ENCODE measurements at regions of chr17 and their contacts with region 1.

Region 1: DNA sequence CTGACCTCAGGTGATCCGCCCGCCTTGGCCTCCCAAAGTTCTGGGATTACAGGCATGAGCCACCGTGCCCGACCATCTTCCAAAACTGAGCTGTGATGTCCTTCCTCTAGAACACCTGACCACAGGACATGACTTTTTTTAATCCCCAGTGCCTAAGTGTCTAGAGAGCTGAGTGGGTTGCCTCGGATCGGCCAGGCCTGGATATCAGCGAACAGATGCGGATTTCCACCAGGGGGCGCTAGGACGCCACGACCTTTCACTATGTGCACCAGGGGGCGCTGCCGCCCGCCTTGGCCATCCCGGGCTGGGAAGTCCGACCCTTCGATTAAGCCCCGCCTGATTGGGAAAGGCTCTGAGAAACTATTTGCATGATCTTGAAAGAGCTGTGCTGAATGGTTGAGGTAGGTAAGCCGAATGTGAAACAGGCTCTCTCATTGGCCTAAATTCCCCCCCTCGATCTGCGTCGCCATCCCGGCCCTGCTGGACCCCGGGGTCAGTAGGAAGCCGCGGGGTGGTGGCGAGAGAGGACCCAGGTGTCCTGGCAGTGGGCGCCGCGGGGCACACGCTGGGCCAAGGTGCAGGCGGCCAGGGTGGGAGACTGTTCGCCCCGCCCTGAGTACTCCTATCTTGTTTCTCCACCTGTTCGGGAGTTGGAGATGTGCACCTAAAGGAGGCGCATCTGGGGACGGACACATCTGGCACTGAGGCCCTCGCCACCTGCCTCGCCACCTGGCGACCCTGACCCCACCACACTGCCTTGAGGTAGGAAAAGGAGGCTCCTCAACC is at the start of gene ACBD4:
- DNase-seq: peak; percentile 96
- H3K4me3 Mint-ChIP-seq: peak within 1 kb of the TSS; percentile 87
- H3K27ac Mint-ChIP-seq: peak within 1 kb of the TSS; percentile 68
- H3K4me1 Mint-ChIP-seq: peaks cover 15% of the 10 kb centered on the region
- H3K27me3 Mint-ChIP-seq: peaks cover 6% of the 10 kb centered on the region
- total RNA-seq, gene ACBD4: 11.3 and 12.5 TPM in 2 replicates

Region 2: GRCh38 chr17:45060797-45061605 is 74.4 kb before region 1 on chr17 and contains the start of gene NMT1:
- intact Hi-C with region 1: loop called (anchors 1 kb)
- DNase-seq: peak; percentile 96
- H3K4me3 Mint-ChIP-seq: peak within 1 kb of the TSS; percentile 92
- H3K27ac Mint-ChIP-seq: peak within 1 kb of the TSS; percentile 100
- H3K4me1 Mint-ChIP-seq: peaks cover 25% of the 10 kb centered on the region
- H3K27me3 Mint-ChIP-seq: peaks cover 2% of the 10 kb centered on the region
- total RNA-seq, gene NMT1: 168 and 173 TPM in 2 replicates

Region 3: DNA sequence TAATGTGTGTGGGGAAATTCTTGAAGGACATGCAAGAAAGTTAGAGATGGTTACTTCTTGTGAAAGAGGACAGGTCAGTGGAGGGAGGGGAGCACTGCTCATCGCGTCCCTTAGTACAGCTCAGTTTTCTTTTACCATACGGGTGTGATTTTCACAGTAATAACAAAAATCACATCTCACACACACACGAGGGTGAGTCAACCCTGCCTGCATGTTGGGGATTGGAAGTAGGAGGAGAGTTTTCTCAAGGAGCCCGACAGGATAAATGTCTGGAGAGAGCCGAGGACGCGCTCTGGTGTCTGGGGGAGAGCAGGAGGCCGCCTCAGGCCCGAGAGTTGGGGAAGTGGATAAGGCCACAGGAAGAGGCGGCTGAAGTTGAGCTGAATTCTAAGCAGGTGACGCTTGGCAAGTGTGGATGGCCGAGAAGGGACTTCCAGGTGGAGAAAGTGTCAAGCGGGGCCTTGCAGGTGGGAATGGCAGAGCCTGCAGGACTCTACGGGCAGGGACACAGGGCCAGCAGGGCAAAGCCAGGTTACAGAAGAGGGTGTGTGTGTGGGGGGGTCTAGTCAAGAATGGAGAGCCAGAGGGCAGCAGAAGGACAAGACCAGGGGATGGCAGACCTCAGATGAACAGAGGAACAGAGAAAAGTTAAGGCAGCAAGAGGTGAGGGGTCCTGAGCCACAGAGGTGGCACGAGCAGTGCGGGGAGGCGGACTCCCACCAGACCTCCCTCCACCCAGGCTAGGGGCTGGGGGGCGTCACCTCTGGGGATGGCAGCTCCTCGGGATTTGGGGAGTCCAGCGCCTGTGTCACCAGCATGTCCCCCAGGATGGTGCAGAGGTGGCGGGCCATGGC is 19.3 kb before region 1 on chr17:
- intact Hi-C with region 1: no loop called
- DNase-seq: no peak
- H3K4me3 Mint-ChIP-seq: no peak overlapping the region
- H3K27ac Mint-ChIP-seq: no peak overlapping the region
- H3K4me1 Mint-ChIP-seq: no peaks in the 10 kb centered on the region
- H3K27me3 Mint-ChIP-seq: peaks cover 7% of the 10 kb centered on the region

Region 4: DNA sequence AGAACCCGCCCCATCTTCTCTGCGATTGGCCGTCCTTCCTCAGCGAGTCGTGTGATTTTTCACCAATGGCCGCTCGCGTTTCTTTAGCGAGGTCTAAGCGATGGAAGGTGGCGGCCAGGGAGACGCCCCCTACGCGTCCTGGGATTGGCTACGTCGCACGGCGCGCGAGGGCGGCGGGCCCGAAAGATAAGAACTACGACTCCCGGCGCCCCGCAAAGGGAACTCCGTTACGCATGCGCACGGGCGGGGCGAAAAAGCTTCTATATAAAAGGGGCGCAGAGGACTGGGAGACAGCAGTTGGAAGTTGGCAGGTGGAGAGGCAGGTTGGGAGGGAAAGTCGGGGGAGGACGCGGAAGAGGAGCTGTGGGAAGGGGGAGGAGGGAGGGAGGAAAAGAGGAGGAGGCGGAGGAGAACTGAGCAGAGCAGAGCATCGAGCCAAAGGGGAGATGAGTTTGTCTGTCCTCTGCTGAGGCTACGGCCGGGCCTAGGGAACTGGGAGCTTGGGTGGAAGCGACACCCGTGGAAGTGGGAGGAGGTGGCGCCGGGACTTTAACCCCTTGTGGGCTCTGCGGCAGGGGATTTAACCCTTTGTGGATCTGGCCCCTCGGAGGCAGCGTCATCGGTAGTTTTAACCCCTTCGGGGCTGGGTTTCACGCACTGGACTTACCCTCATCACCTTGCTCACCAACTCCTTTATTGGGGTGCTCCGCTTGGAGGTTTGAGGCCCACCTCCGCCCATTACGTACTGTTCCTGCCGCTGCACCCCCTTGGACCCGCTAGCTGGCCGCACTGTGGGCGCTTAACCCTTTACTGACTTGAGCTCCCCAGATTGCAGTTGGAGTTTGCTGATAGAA is 13.0 kb after region 1 on chr17 and contains the start of gene HEXIM1:
- intact Hi-C with region 1: loop called (anchors 1 kb)
- DNase-seq: peak; percentile 99
- H3K4me3 Mint-ChIP-seq: peak within 1 kb of the TSS; percentile 96
- H3K27ac Mint-ChIP-seq: peak within 1 kb of the TSS; percentile 98
- H3K4me1 Mint-ChIP-seq: peaks cover 26% of the 10 kb centered on the region
- H3K27me3 Mint-ChIP-seq: no peaks in the 10 kb centered on the region
- total RNA-seq, gene HEXIM1: 65.9 and 67.9 TPM in 2 replicates

Region 5: DNA sequence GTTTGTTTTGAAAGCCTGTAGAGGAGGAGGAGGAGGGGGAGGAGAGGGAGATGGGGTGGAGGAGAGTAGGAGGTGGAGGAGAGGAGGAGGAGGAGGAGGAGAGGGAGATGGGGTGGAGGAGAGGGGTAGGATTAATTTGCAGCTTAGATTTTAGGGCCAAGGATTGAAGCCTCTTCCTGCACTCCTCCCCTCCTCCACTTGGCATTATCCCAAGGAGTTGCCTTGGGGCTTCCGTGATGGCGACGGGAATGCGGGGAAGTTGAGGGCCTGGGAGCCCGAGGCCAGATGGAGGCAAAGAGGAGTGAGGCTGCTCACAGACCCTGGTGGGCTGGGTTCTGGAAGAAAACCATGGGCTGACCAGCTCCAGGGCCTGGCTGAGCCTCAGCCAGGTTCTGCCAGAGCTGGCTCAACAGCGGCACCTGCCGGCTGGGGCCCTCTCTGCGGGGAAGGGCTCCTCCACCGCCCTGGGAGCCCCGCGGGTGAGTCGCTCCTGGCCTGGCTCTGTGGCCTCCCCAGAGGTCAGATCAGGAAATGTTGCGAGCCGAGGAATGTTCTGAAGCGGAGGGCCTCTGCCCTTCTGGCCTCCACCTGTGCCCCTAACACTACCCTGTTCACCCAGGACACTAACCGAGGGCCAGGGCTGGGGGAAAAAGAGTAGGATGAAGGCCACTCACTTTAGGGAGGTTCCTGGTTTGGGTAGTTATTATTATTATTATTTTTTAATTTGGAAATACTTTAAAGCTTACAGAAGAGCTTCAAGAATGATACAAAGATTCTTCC is 62.4 kb after region 1 on chr17:
- intact Hi-C with region 1: loop called (anchors 1 kb)
- DNase-seq: peak; percentile 79
- H3K4me3 Mint-ChIP-seq: no peak overlapping the region
- H3K27ac Mint-ChIP-seq: no peak overlapping the region
- H3K4me1 Mint-ChIP-seq: no peaks in the 10 kb centered on the region
- H3K27me3 Mint-ChIP-seq: no peaks in the 10 kb centered on the region

Region 6: GRCh38 chr17:45256114-45256966 is 121.0 kb after region 1 on chr17:
- intact Hi-C with region 1: no loop called
- DNase-seq: no peak
- H3K4me3 Mint-ChIP-seq: no peak overlapping the region
- H3K27ac Mint-ChIP-seq: no peak overlapping the region
- H3K4me1 Mint-ChIP-seq: peaks cover 57% of the 10 kb centered on the region
- H3K27me3 Mint-ChIP-seq: no peaks in the 10 kb centered on the region

Region 7: GRCh38 chr17:45270828-45271418 is 135.5 kb after region 1 on chr17:
- intact Hi-C with region 1: loop called (anchors 1 kb)
- DNase-seq: peak; percentile 29
- H3K4me3 Mint-ChIP-seq: no peak overlapping the region
- H3K27ac Mint-ChIP-seq: peak overlapping the region; percentile 18
- H3K4me1 Mint-ChIP-seq: peaks cover 20% of the 10 kb centered on the region
- H3K27me3 Mint-ChIP-seq: no peaks in the 10 kb centered on the region